Posterior vena cava (tissue), 2 donors: ENCODE measurements at regions of chr13 and their contacts with region 1.

Region 1: DNA sequence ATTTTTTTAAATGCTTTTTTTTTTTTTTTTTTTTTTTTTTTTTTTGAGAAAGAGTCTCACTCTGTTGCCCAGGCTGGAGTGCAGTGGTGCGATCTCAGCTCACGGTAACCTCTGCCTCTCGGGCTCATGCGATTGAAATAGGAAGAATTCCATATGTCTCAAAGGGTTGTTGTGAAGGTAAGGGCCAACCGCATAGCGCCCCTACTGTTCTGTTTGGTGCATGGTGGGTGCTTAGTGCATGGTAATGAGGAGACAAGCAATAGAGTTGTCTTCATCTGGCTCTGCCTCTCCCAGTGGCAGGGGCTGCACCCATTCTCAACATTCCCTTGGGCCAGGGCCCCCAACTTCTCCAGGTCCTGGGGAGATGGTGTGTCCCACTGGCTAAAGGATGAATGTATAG is 68.7 kb downstream of the RASL11A start:
- DNase-seq: no peak

Region 2: GRCh38 chr13:26502826-26503225 is 836.5 kb before region 1 on chr13:
- intact Hi-C with region 1: no loop called
- DNase-seq: no peak

Region 3: GRCh38 chr13:26971990-26972887 is 367.1 kb before region 1 on chr13:
- intact Hi-C with region 1: no loop called
- DNase-seq: peak; percentile 68

Region 4: DNA sequence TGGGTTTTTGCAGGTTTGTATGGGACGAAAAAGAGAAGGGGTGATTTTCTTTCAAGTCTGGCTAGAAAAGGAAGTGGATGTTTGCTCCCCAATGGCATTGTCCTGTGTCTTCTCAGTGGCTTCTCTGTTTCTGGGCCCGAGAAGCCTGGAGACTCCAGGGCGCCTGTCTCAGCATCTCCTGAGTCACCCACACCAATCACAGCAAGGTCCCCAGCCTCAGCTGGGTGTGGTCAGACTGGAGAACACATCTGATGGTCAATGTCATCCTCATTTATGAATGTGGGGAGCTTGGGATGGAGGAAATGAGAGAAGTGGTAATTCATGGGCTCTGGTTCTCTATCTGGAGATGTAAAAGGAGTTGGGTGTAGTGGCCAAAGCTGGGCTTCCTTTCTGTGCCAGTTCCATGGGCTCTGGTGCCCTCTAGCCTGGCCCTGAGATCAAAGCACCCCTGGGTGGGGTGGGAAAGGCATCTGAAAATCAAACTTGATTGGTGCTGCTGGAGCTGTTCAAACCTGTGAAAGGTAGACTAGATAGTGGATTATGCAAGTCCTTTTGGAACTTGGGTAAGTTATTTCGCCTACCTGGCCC is 55.3 kb before region 1 on chr13:
- intact Hi-C with region 1: loop called in 1 of 2 experiments (anchors 10 kb)
- DNase-seq: no peak